ENCODE measurements at regions of chr1 and their contacts with region 1.

Region 1: DNA sequence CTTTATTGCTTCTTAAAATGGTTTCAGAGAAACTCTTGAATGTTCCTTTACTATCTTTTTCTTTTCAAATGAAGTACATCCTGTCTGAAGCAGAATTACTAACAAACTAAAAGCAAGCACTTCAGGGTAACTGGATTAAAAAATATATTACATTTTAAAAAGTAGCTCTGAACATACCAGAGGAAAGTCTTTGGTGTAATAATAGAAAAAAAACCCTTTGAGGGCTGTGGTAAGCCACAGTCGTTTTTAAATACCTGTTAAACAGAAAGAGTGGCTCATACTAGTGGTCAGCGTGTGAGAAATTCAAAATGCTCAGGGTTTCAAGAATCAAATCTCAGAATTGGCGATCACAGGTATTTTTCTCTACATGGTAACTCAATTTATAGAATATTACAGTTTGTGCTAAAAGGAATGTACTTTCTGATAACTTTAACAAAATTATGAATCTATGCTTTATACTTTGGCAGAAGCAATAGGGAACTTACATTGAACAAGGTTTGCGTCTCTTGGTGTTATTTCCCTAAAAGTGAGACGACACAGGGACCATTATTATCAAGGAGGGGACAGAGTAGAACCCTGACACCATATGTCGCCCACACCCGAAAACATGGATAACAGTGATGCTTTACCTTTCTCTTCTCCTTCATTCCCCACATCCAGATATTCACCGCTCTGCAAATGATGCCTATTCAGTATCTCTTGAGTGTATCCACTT is 97.0 kb upstream of the DPH5 start:
- DNase-seq: no peak
- H3K4me3 Mint-ChIP-seq: no peak overlapping the region
- H3K27ac Mint-ChIP-seq: peak overlapping the region; percentile 1
- H3K4me1 Mint-ChIP-seq: peaks cover 43% of the 10 kb centered on the region
- H3K27me3 Mint-ChIP-seq: no peaks in the 10 kb centered on the region

Region 2: DNA sequence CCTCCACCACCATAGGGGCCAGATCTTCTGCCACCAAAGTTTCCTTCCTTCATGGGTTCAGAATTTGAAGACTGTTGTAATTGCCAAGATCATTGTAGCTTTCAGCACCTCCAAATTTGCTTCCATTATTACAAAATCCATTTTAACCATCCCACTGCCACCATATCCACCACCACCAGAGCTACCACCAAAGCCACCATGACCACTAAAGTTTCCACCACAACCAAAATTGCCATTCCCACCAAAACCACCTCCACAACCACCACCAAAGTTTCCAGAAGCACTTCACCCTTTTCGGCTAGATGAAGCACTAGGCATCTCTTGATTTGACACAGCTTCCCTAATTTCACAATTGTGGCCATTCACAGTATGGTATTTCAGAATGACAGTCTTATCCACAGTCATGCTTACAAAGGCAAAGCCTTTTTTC is 181.5 kb before region 1 on chr1:
- CTCF ChIA-PET with region 1: no interaction called
- POLR2A ChIA-PET with region 1: no interaction called
- intact Hi-C with region 1: loop called (anchors 5 kb)
- DNase-seq: peak; percentile 67
- H3K4me3 Mint-ChIP-seq: peak overlapping the region; percentile 77
- H3K27ac Mint-ChIP-seq: peak overlapping the region; percentile 92
- H3K4me1 Mint-ChIP-seq: peaks cover 39% of the 10 kb centered on the region
- H3K27me3 Mint-ChIP-seq: peaks cover 3% of the 10 kb centered on the region

Region 3: GRCh38 chr1:101136739-101137138 is 14.1 kb after region 1 on chr1:
- CTCF ChIA-PET with region 1: interaction called, 8 read pairs
- POLR2A ChIA-PET with region 1: no interaction called
- intact Hi-C with region 1: loop called (anchors 1 kb)
- DNase-seq: peak; percentile 31
- H3K4me3 Mint-ChIP-seq: peak overlapping the region; percentile 14
- H3K27ac Mint-ChIP-seq: peak overlapping the region; percentile 79
- H3K4me1 Mint-ChIP-seq: peaks cover 60% of the 10 kb centered on the region
- H3K27me3 Mint-ChIP-seq: no peaks in the 10 kb centered on the region

Region 4: DNA sequence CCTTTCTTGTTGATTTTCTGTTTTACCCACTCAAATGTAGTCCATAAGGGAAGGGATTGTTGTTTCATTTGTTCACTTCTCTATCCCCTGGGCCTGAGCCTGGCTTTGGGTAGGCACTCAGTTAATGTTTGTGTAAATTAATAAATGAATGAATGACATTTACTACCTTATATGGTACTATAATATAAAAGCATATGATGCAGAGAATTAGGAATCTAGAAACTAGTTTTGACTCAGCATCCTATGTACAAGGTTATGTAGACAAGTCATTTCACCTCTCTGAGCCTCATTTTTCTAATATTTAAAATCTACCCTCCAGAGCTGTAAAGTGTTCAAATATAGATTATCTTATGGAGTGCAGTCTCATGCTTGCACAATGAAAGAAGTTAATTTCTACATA is 45.3 kb after region 1 on chr1:
- CTCF ChIA-PET with region 1: no interaction called
- POLR2A ChIA-PET with region 1: no interaction called
- intact Hi-C with region 1: no loop called
- DNase-seq: no peak
- H3K4me3 Mint-ChIP-seq: no peak overlapping the region
- H3K27ac Mint-ChIP-seq: peak overlapping the region; percentile 61
- H3K4me1 Mint-ChIP-seq: peaks cover 40% of the 10 kb centered on the region
- H3K27me3 Mint-ChIP-seq: no peaks in the 10 kb centered on the region

Measured in activated CD4-positive, alpha-beta memory T cell treated with anti-CD3 and anti-CD28 coated beads for 36 hours (primary cell).